ENCODE measurements at regions of chr3 and their contacts with region 1.

Region 1: DNA sequence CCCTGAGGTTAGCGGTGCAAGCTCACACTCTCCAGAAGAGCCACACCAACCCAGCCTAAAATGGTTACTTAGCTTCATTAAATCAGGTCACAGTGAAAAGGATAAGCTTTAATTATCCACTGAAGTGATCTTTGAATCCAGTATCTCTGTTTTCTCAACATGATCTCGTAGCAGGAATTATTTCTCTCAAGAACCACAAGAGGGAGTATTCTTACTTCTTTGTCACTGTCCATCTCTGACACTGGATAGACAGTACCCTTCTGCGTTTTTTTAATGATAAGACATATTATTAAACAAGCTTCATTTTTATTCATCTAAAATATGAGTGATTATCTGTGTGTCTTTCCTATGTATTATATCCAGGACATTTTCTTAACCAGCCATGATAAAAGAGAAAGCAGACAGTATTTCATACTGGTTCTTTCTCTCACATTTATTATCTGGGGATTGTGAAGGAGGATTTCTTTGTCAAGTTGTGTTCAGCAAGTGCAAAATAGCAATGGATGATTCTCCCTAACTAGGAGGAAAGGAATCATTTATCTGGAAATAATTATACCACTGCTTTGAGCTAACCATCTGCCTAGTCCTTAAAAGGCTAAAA is 105.4 kb upstream of the CCDC54 start:
- DNase-seq: peak; percentile 36
- H3K4me3 ChIP-seq: no peak overlapping the region
- H3K27ac ChIP-seq: no peak overlapping the region
- H3K4me1 ChIP-seq: no peaks in the 10 kb centered on the region
- H3K27me3 ChIP-seq: peaks cover 4 to 23% of the 10 kb centered on the region in 2 experiments
- CTCF ChIP-seq: peak; percentile 30 to 33
- POLR2A ChIP-seq: no peak

Region 2: DNA sequence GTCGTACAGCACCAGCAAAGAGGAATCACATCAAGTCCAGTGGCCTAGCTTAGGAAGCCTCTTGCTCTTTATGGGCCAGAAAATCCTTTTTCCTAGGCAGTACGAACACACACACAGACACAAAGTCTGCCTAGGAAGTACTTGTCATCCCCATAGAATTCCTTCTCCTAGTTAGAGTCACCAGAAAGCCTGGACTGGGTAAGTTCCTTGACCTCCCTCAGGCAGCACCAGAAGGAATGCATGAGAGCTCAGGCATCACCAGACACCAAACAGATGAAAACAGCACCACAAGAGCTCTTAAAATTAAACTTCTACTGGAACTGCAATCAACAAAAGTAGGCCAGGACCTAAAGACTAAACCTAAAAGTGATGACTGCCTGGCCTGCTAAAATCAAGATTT is 87.5 kb before region 1 on chr3:
- CTCF ChIA-PET with region 1: no interaction called
- POLR2A ChIA-PET with region 1: no interaction called
- dilution Hi-C with region 1: no loop called
- intact Hi-C with region 1: no loop called
- DNase-seq: no peak
- H3K4me3 ChIP-seq: no peak overlapping the region
- H3K27ac ChIP-seq: no peak overlapping the region
- H3K4me1 ChIP-seq: no peaks in the 10 kb centered on the region
- H3K27me3 ChIP-seq: no peaks in the 10 kb centered on the region
- CTCF ChIP-seq: no peak
- POLR2A ChIP-seq: no peak

Region 3: DNA sequence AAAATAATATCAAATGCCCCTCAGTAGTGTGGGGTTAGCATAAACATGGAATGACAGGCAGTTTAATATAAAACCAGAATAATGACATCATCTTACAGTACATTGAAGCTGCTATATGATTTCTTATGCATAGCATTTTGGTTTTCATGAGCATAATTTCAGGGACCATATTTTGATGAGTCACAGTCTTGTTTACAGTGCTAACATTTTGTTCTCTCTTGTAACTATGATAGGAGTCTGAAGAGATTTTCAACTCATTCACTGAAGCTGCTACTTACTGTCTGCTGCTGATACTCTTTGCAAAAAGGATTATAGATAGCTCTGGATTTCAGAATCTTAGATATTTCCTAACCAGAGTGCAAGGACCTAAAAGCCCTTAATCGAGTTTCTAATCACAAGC is 12.7 kb after region 1 on chr3:
- CTCF ChIA-PET with region 1: interaction called, 11 read pairs
- POLR2A ChIA-PET with region 1: no interaction called
- dilution Hi-C with region 1: no loop called
- intact Hi-C with region 1: no loop called
- DNase-seq: no peak
- H3K4me3 ChIP-seq: no peak overlapping the region
- H3K27ac ChIP-seq: no peak overlapping the region
- H3K4me1 ChIP-seq: no peaks in the 10 kb centered on the region
- H3K27me3 ChIP-seq: peaks cover 5 to 16% of the 10 kb centered on the region in 2 experiments
- CTCF ChIP-seq: no peak
- POLR2A ChIP-seq: no peak